Activated CD8-positive, alpha-beta memory T cell treated with anti-CD3 and anti-CD28 coated beads, Interleukin-2, amount 10 ng/mL, durations not matched to agents 7 days and 5 days (primary cell): ENCODE measurements at regions of chr14 and their contacts with region 1.

Region 1: DNA sequence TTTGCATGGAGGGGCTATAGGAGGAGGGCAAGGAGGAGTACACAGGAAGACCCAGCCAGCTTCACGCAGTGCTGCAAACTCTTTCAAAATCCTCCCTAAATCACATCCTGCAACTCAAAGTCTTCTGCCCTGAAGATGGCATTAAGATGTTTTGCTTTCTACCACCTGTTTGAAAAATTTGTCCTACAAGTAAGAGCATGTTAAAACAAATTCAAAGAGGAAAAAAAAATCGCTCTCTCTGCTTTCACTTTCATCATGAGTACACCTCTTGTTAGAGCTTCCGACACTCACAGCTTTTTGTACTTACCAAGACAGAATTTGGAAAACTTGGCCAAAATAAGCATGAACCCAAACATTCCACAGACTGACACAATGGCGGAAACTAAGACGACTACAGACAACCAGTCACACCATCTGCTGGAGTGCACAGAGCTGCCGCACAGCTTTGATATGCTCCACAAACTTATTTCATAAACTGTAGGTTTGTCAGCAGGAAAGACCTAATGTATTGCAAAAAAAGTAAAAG is 21.3 kb downstream of the GCH1 start:
- DNase-seq: peak; percentile 56
- ATAC-seq: peak; percentile 65
- H3K4me3 Mint-ChIP-seq: peak overlapping the region; percentile 80
- H3K27ac Mint-ChIP-seq: peak overlapping the region; percentile 98
- H3K4me1 Mint-ChIP-seq: peaks cover 42% of the 10 kb centered on the region
- H3K27me3 Mint-ChIP-seq: no peaks in the 10 kb centered on the region

Region 2: GRCh38 chr14:54787261-54787660 is 94.0 kb before region 1 on chr14:
- CTCF ChIA-PET with region 1: no interaction called
- DNase-seq: no peak
- ATAC-seq: no peak
- H3K4me3 Mint-ChIP-seq: no peak overlapping the region
- H3K27ac Mint-ChIP-seq: no peak overlapping the region
- H3K4me1 Mint-ChIP-seq: peaks cover 10% of the 10 kb centered on the region
- H3K27me3 Mint-ChIP-seq: peaks cover 3% of the 10 kb centered on the region

Region 3: GRCh38 chr14:54893151-54893760 is 12.0 kb after region 1 on chr14:
- CTCF ChIA-PET with region 1: interaction called, 23 read pairs
- DNase-seq: no peak
- ATAC-seq: peak; percentile 74
- H3K4me3 Mint-ChIP-seq: no peak overlapping the region
- H3K27ac Mint-ChIP-seq: no peak overlapping the region
- H3K4me1 Mint-ChIP-seq: peaks cover 47% of the 10 kb centered on the region
- H3K27me3 Mint-ChIP-seq: no peaks in the 10 kb centered on the region

Region 4: GRCh38 chr14:54902521-54903420 is 21.5 kb after region 1 on chr14 and contains the start of gene GCH1:
- CTCF ChIA-PET with region 1: interaction called, 21 read pairs
- DNase-seq: peak; percentile 83
- ATAC-seq: peak; percentile 83
- H3K4me3 Mint-ChIP-seq: peak within 1 kb of the TSS; percentile 93
- H3K27ac Mint-ChIP-seq: peak within 1 kb of the TSS; percentile 89
- H3K4me1 Mint-ChIP-seq: peaks cover 56% of the 10 kb centered on the region
- H3K27me3 Mint-ChIP-seq: no peaks in the 10 kb centered on the region
- total RNA-seq, gene GCH1: 70.8 to 73.2 TPM

Region 5: DNA sequence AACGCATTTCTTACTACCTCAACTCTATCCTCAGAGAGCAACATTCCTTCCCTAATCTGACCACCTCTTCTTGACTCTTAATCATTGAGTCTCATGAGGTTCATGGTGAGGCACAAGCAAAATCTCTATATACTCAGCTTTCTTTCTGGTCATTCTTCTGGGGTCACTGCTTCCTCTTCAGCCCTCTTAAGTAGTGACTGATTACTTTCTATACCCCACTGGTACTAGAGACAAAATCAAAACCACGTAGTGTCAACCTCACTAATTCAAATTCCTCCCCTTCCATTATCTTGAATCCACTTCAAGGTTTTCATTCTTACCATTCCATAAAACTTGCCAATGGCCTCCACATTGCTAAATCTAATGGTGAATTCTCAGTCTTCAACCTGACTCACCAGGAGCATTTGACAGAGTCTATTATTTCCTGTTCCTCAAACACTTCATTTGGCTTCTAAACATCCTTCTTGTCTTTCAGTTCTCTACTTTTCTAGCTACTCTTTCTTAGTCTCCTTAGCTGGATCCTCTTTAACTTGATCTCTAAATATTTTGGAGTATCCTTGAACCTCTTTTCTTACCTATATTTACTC is 138.8 kb after region 1 on chr14:
- CTCF ChIA-PET with region 1: no interaction called
- DNase-seq: no peak
- ATAC-seq: no peak
- H3K4me3 Mint-ChIP-seq: no peak overlapping the region
- H3K27ac Mint-ChIP-seq: no peak overlapping the region
- H3K4me1 Mint-ChIP-seq: peaks cover 28% of the 10 kb centered on the region
- H3K27me3 Mint-ChIP-seq: no peaks in the 10 kb centered on the region